ENCODE measurements at regions of chr6 and their contacts with region 1.

Region 1: DNA sequence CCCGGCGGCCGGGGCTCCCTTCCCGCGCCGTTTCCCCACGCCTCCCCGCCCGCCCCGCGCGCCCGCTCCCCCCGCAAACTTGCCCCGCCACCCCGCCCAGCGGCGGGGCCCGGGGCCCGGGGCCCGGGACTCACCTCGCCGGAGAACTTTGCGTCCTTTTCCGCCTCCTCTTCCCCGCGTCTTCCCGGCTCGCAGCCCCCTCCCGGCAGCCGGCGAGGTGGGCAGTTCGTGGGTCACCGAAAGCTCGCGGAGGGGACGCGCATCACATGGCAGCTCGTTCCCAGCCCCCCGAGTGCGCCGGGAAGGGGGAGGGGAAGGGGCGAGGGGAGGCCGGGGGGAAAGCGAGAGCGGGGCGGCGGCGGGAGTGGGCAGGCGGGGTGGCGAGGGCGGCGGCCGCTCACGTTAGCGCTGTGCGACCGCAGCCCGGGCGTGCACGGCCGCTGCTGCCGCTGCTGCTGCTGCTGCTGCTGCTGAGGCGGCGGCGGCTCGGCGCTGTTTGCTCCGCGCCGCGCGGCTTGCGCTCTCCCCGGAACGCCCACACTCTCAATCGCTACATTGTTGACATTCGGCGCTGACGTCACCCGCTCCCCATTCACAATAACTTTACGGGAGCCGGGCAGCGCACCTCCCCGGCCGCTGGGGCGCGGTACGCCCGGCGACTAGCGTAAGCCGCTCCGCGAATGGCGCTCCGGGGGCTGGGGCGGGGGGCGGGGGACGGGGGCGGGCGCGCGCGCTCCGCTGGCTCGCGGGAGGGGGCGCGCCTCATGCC is at the start of gene BACH2:
- DNase-seq: peak; percentile 90
- H3K4me3 ChIP-seq: peak within 1 kb of the TSS; percentile 54
- H3K27ac ChIP-seq: no peak within 1 kb of the TSS
- H3K4me1 ChIP-seq: peaks cover 13% of the 10 kb centered on the region
- H3K27me3 ChIP-seq: peaks cover 86% of the 10 kb centered on the region
- CTCF ChIP-seq: no peak
- total RNA-seq, gene BACH2: 0.37 and 1.9 TPM in 2 replicates

Region 2: GRCh38 chr6:89940225-89941027 is 356.1 kb before region 1 on chr6:
- CTCF ChIA-PET with region 1: interaction called, 3 read pairs
- POLR2A ChIA-PET with region 1: no interaction called
- intact Hi-C with region 1: loop called (anchors 10 kb)
- DNase-seq: peak; percentile 82
- H3K4me3 ChIP-seq: no peak overlapping the region
- H3K27ac ChIP-seq: no peak overlapping the region
- H3K4me1 ChIP-seq: no peaks in the 10 kb centered on the region
- H3K27me3 ChIP-seq: no peaks in the 10 kb centered on the region
- CTCF ChIP-seq: peak; percentile 81

Region 3: DNA sequence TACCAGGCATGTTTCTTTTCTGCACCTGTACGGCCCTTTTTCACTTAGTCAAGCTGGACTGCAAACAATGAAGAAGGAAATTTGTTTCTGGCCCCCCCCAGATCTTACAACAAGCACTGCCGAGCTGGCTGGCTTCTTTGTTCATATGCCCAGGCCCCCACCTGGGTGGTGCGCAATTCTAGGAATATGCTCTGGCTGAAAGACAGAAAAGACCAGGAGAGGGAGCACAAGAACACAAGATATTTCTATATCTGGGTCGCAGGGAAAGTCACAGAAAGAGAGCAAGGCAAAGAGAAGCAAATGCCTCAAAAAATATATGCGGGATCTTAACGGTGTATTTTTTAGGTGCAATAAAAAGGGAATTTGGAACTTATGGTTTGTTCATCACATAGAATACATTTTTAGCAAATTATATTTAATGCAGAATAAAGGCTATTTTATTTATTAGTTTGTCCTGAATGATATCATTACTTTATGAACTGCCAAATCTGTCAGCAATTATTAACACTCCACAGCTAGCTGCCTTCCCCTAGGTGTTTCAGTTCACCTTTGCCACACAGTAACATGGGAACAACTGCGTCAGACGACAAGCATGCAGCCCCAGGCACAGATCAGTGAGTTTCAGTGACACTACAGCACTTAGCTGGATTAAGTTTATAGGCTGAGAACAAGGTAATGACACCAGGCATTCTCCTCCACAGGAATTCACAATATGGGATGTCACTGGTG is 325.8 kb before region 1 on chr6:
- CTCF ChIA-PET with region 1: no interaction called
- POLR2A ChIA-PET with region 1: no interaction called
- intact Hi-C with region 1: loop called (anchors 5 kb)
- DNase-seq: peak; percentile 77
- H3K4me3 ChIP-seq: no peak overlapping the region
- H3K27ac ChIP-seq: no peak overlapping the region
- H3K4me1 ChIP-seq: no peaks in the 10 kb centered on the region
- H3K27me3 ChIP-seq: peaks cover 20% of the 10 kb centered on the region
- CTCF ChIP-seq: peak; percentile 79

Region 4: GRCh38 chr6:90088009-90088408 is 208.5 kb before region 1 on chr6:
- CTCF ChIA-PET with region 1: no interaction called
- POLR2A ChIA-PET with region 1: no interaction called
- intact Hi-C with region 1: no loop called
- DNase-seq: peak; percentile 5
- H3K4me3 ChIP-seq: no peak overlapping the region
- H3K27ac ChIP-seq: no peak overlapping the region
- H3K4me1 ChIP-seq: no peaks in the 10 kb centered on the region
- H3K27me3 ChIP-seq: peaks cover 4% of the 10 kb centered on the region
- CTCF ChIP-seq: no peak

Region 5: DNA sequence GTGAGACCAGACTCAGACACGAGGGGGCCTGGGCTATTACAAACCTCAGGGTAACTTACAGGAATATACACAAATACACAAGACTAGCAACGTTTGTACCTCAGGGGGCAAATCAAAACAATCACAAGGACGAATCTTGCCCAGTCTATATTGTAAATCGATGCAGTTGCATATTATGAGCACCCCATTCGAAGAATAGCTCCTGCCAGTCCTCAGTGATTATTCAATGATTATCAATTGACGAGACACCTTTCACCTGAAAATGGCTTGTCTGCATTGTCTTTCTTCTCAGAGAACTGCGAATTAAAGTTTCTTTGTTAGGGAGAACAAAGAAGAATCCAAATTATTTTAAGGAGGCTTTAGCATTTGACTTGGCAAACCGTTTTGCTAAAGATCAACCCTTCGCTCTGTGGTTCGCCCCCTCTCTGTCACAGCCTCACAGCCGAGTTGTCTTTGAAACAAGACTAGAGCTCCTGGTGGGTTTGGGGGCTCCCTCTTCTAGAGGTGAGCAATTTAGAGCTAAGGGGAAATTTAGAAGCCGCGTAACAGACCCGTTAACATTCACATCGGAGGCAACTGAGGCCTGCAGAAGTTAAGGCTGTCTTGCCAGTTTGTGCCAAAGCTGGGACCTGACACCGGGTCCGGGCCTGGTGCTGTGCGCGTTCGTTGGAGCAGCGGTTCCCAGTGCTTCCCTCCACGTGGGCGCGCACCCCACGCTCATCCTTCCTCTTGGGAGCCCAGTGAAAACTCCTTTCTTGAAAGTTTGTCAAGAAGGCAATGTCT is 315.2 kb after region 1 on chr6:
- CTCF ChIA-PET with region 1: no interaction called
- POLR2A ChIA-PET with region 1: no interaction called
- intact Hi-C with region 1: no loop called
- DNase-seq: no peak
- H3K4me3 ChIP-seq: peak overlapping the region; percentile 67
- H3K27ac ChIP-seq: no peak overlapping the region
- H3K4me1 ChIP-seq: peaks cover 10% of the 10 kb centered on the region
- H3K27me3 ChIP-seq: peaks cover 2% of the 10 kb centered on the region
- CTCF ChIP-seq: no peak; the same call in 1 of the 2 replicates

Measured in A673 (cell line).